ENCODE measurements at regions of chr1 and their contacts with region 1.

Region 1: DNA sequence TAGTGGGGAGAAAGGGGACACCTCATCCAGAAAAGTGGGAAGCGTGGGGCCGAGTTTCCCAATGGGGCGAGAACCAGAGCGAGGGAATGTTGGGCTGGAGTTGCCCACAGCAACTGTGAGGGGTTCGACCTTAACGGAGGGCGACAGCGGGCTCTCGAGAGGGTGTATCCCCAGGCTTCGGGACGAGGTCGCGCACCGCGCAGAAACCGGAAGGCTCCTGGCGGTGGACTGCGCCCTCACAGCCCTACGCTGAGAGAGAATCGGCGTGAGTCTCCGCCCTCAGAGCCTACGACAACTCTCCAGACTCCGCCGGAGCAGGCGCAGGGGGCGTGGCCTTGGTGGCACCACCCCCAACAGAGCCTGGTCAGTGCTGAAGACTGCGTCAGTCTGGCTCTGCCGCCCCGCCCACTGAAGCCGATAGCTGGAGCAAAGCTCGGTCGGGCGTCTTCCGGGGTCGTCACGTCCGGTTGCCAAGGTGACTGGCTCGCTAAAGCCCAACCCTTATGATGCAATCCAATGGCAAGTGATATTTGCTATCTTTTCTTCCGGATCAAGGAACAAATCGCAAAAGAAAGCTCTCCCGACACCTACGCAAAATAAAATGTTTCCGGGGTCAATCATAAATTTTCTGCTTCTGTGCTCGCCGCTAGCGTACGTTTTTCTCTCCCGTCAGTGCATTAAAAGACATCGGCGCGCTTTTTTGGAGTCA is at the start of gene LRIF1:
- DNase-seq: peak; percentile 100
- H3K4me3 Mint-ChIP-seq: peak within 1 kb of the TSS; percentile 90
- H3K27ac Mint-ChIP-seq: peak within 1 kb of the TSS; percentile 96
- H3K4me1 Mint-ChIP-seq: peaks cover 43% of the 10 kb centered on the region
- H3K27me3 Mint-ChIP-seq: peaks cover 2% of the 10 kb centered on the region
- total RNA-seq, gene LRIF1: 13.8 and 14.8 TPM in 2 replicates

Region 2: DNA sequence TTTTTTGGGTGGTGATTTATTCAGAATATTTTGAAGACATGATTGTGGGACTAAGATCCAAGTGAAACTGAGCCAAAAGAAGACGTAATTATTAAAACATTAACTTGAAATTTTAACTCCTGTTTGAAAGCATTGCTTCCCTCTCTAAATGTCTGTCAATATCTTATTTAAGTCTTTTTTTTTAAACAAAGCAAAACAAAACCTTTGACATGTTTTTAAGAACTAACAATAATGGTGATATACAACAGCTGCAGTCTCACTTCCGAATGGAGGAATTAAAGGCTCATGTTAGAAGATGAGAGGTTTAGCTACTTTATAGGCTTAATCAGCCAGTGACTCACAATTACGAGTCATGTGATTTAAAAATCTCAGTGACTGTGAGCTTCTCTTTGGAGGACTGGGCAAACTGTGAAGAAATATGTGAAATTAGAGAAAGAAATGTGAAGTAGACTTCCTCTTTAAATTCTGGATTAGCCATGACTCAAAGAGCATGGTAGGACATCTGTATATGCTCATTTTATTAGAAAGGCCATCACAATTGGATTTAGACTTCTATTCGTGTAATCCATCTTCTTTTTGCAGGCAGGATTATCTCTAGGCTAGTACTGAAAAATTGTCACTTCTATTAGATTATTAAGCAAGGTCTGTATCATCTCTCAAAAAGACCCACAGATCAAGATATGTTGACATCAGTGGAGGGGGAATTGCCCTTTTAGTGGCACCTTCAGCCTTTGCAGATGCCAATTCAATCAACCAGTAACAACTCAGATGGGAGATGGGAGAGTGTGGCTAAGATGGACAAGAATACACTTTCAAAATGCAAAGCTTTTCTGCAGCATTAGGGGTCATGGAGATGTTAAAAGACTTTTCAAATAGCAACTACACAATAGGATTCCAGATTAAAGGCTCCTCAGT is 317.8 kb before region 1 on chr1:
- intact Hi-C with region 1: loop called (anchors 5 kb)
- DNase-seq: no peak
- H3K4me3 Mint-ChIP-seq: peak overlapping the region; percentile 56
- H3K27ac Mint-ChIP-seq: peak overlapping the region; percentile 81
- H3K4me1 Mint-ChIP-seq: peaks cover 53% of the 10 kb centered on the region
- H3K27me3 Mint-ChIP-seq: no peaks in the 10 kb centered on the region

Region 3: GRCh38 chr1:110872745-110873720 is 90.8 kb before region 1 on chr1 and contains the start of gene CD53:
- intact Hi-C with region 1: loop called (anchors 1 kb)
- DNase-seq: peak; percentile 47
- H3K4me3 Mint-ChIP-seq: peak within 1 kb of the TSS; percentile 99
- H3K27ac Mint-ChIP-seq: peak within 1 kb of the TSS; percentile 98
- H3K4me1 Mint-ChIP-seq: peaks cover 49% of the 10 kb centered on the region
- H3K27me3 Mint-ChIP-seq: no peaks in the 10 kb centered on the region
- total RNA-seq, gene CD53: 201 and 204 TPM in 2 replicates

Region 4: DNA sequence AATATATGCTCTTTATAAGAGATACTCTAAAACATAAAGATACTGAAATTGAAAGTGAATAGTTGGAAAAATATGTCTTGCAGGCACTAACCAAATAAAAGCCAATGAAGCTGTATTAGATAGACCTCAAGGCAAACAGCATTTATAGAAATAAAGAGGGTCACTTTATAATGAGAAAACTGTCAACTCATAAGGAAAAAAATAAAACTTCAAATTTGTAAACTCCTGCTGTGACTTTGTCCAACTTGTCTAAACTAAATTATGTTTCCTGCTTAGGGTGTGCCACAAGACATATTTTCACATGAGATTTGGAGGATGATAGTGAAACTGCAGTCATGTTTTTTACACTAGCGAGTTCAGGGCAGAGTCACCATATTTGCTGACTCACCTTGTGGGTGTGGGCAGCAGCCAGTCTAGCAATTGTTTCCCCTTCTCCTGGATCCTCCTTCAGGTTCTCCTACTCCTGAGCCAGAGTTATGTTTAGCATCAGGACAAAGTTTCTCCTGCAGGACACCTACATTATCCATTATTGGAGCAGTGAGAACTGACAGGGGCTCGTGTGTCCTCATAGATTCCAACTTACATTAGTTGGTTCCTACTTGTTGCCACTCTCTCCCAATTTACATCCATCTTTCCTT is 47.1 kb before region 1 on chr1:
- intact Hi-C with region 1: loop called (anchors 2 kb)
- DNase-seq: peak; percentile 36
- H3K4me3 Mint-ChIP-seq: peak overlapping the region; percentile 56
- H3K27ac Mint-ChIP-seq: peak overlapping the region; percentile 71
- H3K4me1 Mint-ChIP-seq: peaks cover 19% of the 10 kb centered on the region
- H3K27me3 Mint-ChIP-seq: peaks cover 2% of the 10 kb centered on the region

Region 5: GRCh38 chr1:111203681-111204200 is 239.9 kb after region 1 on chr1:
- intact Hi-C with region 1: loop called (anchors 5 kb)
- DNase-seq: peak; percentile 80
- H3K4me3 Mint-ChIP-seq: peak overlapping the region; percentile 100
- H3K27ac Mint-ChIP-seq: peak overlapping the region; percentile 92
- H3K4me1 Mint-ChIP-seq: peaks cover 59% of the 10 kb centered on the region
- H3K27me3 Mint-ChIP-seq: no peaks in the 10 kb centered on the region

Region 6: DNA sequence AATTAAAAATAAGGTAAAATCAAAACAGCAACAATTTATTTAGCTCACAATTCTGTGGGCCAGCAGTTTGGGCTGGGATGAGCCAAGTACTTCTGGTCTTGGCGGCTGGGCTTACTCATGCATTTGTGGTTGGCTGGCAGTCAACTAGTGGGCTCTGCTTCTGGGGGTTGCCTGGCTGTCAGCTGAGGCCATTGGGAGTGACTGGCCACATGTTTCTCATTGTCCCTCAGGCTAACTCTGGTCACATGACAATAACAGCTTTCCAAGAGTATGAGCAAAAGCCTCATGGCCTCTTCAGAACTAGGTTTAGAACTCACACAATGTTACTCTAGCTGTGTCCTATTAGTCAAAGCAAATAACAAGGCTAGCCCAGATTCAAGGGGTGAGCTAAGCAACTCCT is 311.2 kb after region 1 on chr1:
- intact Hi-C with region 1: loop called (anchors 10 kb)
- DNase-seq: peak; percentile 8
- H3K4me3 Mint-ChIP-seq: no peak overlapping the region
- H3K27ac Mint-ChIP-seq: peak overlapping the region; percentile 37
- H3K4me1 Mint-ChIP-seq: peaks cover 26% of the 10 kb centered on the region
- H3K27me3 Mint-ChIP-seq: peaks cover 20% of the 10 kb centered on the region

Region 7: DNA sequence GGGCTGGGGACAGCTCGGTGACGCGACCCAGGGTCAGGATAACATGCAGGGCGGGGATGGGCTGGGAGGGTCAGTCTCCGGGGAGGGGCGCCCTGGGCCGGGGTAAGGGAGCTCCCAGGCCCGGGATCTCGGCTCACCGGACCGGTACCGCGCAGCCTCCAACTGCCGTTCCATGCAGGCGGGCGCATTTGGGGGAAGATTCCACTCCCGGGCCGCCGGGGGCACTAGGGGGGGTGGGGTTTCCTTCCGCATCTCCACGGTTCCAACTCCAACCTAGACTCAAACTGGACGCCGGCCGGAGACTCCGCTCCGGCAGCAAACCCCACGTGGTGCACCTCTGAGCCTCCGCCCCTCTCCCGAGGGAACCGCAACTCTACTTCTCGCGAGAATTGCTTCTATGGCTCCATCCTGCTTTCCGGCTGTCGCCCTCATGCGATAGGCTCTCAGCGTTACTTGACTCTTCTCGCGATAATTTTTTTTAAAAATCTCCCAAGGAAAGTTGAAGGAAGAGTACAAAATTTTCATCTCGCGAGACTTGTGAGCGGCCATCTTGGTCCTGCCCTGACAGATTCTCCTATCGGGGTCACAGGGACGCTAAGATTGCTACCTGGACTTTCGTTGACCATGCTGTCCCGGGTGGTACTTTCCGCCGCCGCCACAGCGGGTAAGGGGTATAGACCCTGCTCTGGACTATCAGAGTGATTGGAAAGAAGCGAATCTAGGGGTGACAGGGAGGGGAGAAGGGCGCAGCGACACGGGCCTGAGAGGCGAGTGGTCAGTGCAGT is 485.3 kb after region 1 on chr1 and contains the starts of genes ATP5PB and WDR77:
- intact Hi-C with region 1: loop called (anchors 1 kb)
- DNase-seq: peak; percentile 91
- H3K4me3 Mint-ChIP-seq: peak within 1 kb of the TSS; percentile 100
- H3K27ac Mint-ChIP-seq: peak within 1 kb of the TSS; percentile 96
- H3K4me1 Mint-ChIP-seq: peaks cover 74% of the 10 kb centered on the region
- H3K27me3 Mint-ChIP-seq: no peaks in the 10 kb centered on the region
- total RNA-seq, gene ATP5PB: 280 and 282 TPM in 2 replicates
- total RNA-seq, gene WDR77: 61.3 and 62.5 TPM in 2 replicates

Region 8: GRCh38 chr1:112472142-112472541 is 1508.3 kb after region 1 on chr1:
- intact Hi-C with region 1: no loop called
- DNase-seq: no peak
- H3K4me3 Mint-ChIP-seq: no peak overlapping the region
- H3K27ac Mint-ChIP-seq: no peak overlapping the region
- H3K4me1 Mint-ChIP-seq: no peaks in the 10 kb centered on the region
- H3K27me3 Mint-ChIP-seq: peaks cover 26% of the 10 kb centered on the region

Measured in activated T-helper 1 cell treated with anti-CD3 and anti-CD28 coated beads, Interleukin-12 subunit alpha, Interleukin-12 subunit beta, Interleukin-2, Interleukin-4 antibody, amounts not matched to agents 30 ng/mL and 10 ng/mL and 1 ng/mL, durations not matched to agents 14 hours and 24 hours and 36 hours (primary cell).